OCI-LY7 (cell line): ENCODE measurements at regions of chr6 and their contacts with region 1.

Region 1: DNA sequence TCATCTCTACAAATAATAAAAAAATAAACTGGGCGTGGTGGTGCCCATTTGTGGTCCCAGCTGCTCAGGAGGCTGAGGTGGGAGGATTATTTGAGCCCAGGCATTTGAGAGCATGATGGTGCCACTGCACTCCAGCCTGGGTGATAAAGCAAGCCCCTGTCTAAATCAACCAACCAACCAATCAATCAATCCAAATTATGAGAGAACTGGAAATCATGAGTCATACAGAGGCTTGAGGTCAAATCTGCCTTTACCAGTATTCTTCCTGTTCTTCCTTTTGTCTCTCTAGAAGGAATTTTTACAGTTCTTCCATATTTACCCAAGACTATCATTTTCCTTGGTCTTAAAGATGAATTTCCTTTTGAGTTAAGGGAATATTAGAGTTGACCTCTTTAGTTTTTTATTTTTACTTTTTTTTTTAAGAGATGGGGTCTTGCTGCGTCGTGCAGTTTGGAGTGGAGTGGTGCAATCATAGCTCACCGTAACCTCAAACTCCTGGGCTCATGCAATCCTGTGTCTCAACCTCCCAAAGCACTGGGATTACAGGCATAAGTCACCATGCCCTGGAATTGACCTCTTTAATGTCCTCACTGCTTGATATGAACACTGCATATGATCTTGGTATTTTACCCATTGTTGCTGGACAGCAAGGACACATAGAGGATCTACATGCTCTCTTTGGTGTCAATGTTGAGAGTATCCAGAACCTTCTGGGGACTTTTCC is 44.1 kb upstream of the TXNDC5 start:
- DNase-seq: no peak
- H3K4me3 ChIP-seq: no peak overlapping the region
- H3K27ac ChIP-seq: no peak overlapping the region
- H3K4me1 ChIP-seq: no peaks in the 10 kb centered on the region
- CTCF ChIP-seq: no peak

Region 2: DNA sequence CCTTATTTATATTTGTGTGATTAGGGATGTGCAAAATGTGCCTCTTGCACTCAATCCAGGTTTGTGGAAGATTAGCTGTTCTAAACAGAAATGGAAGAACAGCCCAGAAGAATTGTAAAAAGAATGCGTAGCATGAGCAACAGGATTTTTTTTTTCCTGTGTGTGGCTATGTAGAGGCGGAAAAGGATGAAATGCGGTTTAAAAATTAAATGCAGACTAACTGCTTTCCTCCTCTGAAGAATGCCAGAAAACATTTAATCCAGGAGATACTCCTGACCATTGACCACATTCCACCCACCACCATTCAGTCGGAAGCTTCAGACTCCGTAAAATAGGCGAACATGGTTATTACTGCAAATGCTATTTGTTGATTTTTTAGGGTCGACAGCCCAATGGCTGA is 145.3 kb before region 1 on chr6:
- CTCF ChIA-PET with region 1: no interaction called
- POLR2A ChIA-PET with region 1: interaction called, 11 read pairs
- intact Hi-C with region 1: no loop called
- DNase-seq: no peak
- H3K4me3 ChIP-seq: no peak overlapping the region
- H3K27ac ChIP-seq: no peak overlapping the region
- H3K4me1 ChIP-seq: no peaks in the 10 kb centered on the region
- CTCF ChIP-seq: no peak

Region 3: DNA sequence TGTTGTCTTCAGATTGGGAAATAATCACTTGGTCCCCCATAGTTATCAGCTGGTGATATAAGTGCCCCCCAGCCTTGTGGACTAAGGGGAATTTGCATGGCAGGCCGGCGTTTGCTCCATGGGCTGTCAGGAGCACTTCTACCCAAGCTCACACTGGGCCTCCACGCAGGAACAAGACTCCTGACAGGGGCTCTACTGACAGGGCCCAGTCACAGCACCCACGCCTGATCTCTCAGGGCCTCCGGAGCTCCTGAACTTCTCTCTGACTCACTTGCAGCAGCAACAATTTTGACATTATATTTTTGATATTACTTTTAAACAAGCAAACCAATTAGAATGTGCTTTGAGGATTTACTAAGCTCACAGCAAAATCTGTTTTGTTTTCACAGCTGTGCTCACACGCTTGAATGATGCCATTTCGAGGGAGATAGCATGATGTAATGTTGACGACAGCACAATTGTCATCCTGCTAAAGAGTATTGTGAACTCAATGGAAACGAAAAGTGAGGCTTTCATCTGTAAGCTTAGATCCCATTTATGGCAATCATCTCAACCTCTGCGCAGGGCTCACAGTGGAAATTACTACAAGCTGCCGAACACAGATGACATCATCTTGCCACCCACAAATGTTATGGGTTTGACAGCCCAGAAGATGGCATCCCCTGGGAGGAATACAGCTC is 15.3 kb before region 1 on chr6:
- CTCF ChIA-PET with region 1: interaction called, 3 read pairs
- POLR2A ChIA-PET with region 1: interaction called, 25 read pairs
- intact Hi-C with region 1: no loop called
- DNase-seq: no peak
- H3K4me3 ChIP-seq: no peak overlapping the region
- H3K27ac ChIP-seq: no peak overlapping the region
- H3K4me1 ChIP-seq: peaks cover 20% of the 10 kb centered on the region
- CTCF ChIP-seq: no peak

Region 4: GRCh38 chr6:8047541-8048292 is 93.1 kb after region 1 on chr6:
- CTCF ChIA-PET with region 1: no interaction called
- POLR2A ChIA-PET with region 1: no interaction called
- intact Hi-C with region 1: no loop called
- DNase-seq: no peak
- H3K4me3 ChIP-seq: no peak overlapping the region
- H3K27ac ChIP-seq: no peak overlapping the region
- H3K4me1 ChIP-seq: no peaks in the 10 kb centered on the region
- CTCF ChIP-seq: no peak

Region 5: GRCh38 chr6:8499540-8499939 is 544.9 kb after region 1 on chr6:
- CTCF ChIA-PET with region 1: no interaction called
- POLR2A ChIA-PET with region 1: no interaction called
- intact Hi-C with region 1: no loop called
- DNase-seq: peak; percentile 3
- H3K4me3 ChIP-seq: no peak overlapping the region
- H3K27ac ChIP-seq: no peak overlapping the region
- H3K4me1 ChIP-seq: no peaks in the 10 kb centered on the region
- CTCF ChIP-seq: peak; percentile 55